ENCODE measurements at regions of chr14 and their contacts with region 1.

Region 1: GRCh38 chr14:71187647-71188356 is 280.5 kb downstream of the PCNX1 start:
- DNase-seq: no peak
- H3K27ac ChIP-seq: no peak overlapping the region
- CTCF ChIP-seq: no peak

Region 2: DNA sequence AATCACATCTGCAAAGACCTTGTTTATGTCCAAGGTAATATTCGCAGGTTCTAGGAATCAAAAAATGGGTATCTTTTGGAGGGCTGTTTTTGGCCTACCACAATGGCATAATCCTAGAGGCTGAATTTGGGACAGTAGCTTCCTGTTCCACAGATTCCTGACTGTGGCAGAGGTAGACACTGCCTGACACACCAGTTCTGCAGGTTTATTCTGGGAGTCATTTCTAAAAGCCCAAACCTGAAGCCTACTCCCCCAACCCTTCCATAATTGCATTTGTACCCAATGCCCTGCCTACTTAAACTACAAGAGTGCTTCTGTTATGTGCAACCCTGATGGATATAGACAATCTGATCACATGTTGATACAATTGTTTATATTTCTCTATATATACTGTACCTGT is 98.3 kb after region 1 on chr14:
- CTCF ChIA-PET with region 1: no interaction called
- POLR2A ChIA-PET with region 1: no interaction called
- DNase-seq: no peak
- H3K27ac ChIP-seq: no peak overlapping the region
- CTCF ChIP-seq: no peak

Region 3: DNA sequence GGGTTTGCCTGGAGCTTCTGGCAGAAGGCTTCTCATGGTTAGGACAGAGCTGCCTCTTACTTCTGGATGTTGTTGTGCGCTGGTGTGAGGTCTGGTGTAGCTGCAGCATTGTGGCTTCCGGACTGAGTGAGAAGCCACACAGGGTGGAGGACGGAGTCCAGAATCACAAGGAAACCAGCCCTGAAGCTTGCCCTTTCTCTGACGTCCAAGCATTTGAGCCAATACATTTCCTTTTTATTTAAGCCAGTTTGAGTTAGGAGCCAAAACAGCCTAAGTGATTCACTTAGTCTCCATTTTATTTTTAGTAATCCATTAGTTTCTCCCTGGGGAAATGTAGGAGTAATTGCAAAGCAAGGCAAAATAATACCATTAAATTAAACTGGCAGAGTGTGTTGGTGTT is 342.0 kb after region 1 on chr14:
- CTCF ChIA-PET with region 1: interaction called, 12 read pairs
- POLR2A ChIA-PET with region 1: no interaction called
- DNase-seq: no peak
- H3K27ac ChIP-seq: no peak overlapping the region
- CTCF ChIP-seq: no peak

Region 4: GRCh38 chr14:71638523-71639196 is 450.9 kb after region 1 on chr14:
- CTCF ChIA-PET with region 1: no interaction called
- POLR2A ChIA-PET with region 1: no interaction called
- DNase-seq: no peak
- H3K27ac ChIP-seq: no peak overlapping the region
- CTCF ChIP-seq: no peak

Measured in RWPE1 (cell line).